Esophagus muscularis mucosa (tissue), 4 donors: ENCODE measurements at regions of chr4 and their contacts with region 1.

Region 1: GRCh38 chr4:153127760-153128494 is 76.3 kb upstream of the TRIM2 start:
- DNase-seq: peak; percentile 97
- H3K4me3 ChIP-seq: peak overlapping the region in 1 of 4 donors; percentile 5
- H3K27ac ChIP-seq: no peak overlapping the region
- H3K4me1 ChIP-seq: peaks cover 0 to 6% (median 4%) of the 10 kb centered on the region in 4 donors
- H3K27me3 ChIP-seq: no peaks in the 10 kb centered on the region
- CTCF ChIP-seq: peak; percentile 80 to 90 (median 88)
- EP300 ChIP-seq: no peak
- POLR2A ChIP-seq: no peak

Region 2: GRCh38 chr4:152843481-152844090 is 284.3 kb before region 1 on chr4:
- intact Hi-C with region 1: loop called (anchors 2 kb)
- DNase-seq: no peak
- H3K4me3 ChIP-seq: no peak overlapping the region
- H3K27ac ChIP-seq: no peak overlapping the region
- H3K4me1 ChIP-seq: peaks cover 0 to 6% (median 0%) of the 10 kb centered on the region in 4 donors
- H3K27me3 ChIP-seq: no peaks in the 10 kb centered on the region
- CTCF ChIP-seq: no peak
- EP300 ChIP-seq: no peak
- POLR2A ChIP-seq: no peak

Region 3: GRCh38 chr4:153083447-153083947 is 44.4 kb before region 1 on chr4:
- intact Hi-C with region 1: loop called (anchors 1 kb)
- DNase-seq: no peak
- H3K4me3 ChIP-seq: no peak overlapping the region
- H3K27ac ChIP-seq: no peak overlapping the region
- H3K4me1 ChIP-seq: peaks cover 5 to 20% (median 13%) of the 10 kb centered on the region in 4 donors
- H3K27me3 ChIP-seq: no peaks in the 10 kb centered on the region
- CTCF ChIP-seq: peak; percentile 59 to 68 (median 64)
- EP300 ChIP-seq: no peak
- POLR2A ChIP-seq: no peak

Region 4: GRCh38 chr4:153159728-153160221 is 31.8 kb after region 1 on chr4:
- intact Hi-C with region 1: no loop called
- DNase-seq: no peak
- H3K4me3 ChIP-seq: no peak overlapping the region
- H3K27ac ChIP-seq: no peak overlapping the region
- H3K4me1 ChIP-seq: no peaks in the 10 kb centered on the region
- H3K27me3 ChIP-seq: no peaks in the 10 kb centered on the region
- CTCF ChIP-seq: no peak
- EP300 ChIP-seq: no peak
- POLR2A ChIP-seq: no peak